ENCODE measurements at regions of chr16 and their contacts with region 1.

Region 1: GRCh38 chr16:85114909-85115567 is 2.8 kb upstream of the CIBAR2 start:
- DNase-seq: no peak
- H3K4me3 ChIP-seq: no peak overlapping the region
- H3K27me3 ChIP-seq: no peaks in the 10 kb centered on the region
- CTCF ChIP-seq: peak; percentile 99

Region 2: GRCh38 chr16:84995663-84996062 is 119.4 kb before region 1 on chr16:
- CTCF ChIA-PET with region 1: no interaction called
- POLR2A ChIA-PET with region 1: no interaction called
- DNase-seq: no peak
- H3K4me3 ChIP-seq: no peak overlapping the region
- H3K27me3 ChIP-seq: no peaks in the 10 kb centered on the region
- CTCF ChIP-seq: no peak

Region 3: GRCh38 chr16:85126705-85127419 is 11.8 kb after region 1 on chr16:
- CTCF ChIA-PET with region 1: interaction called, 36 read pairs
- POLR2A ChIA-PET with region 1: no interaction called
- DNase-seq: no peak
- H3K4me3 ChIP-seq: no peak overlapping the region
- H3K27me3 ChIP-seq: no peaks in the 10 kb centered on the region
- CTCF ChIP-seq: peak; percentile 13; the same call in 1 of the 2 replicates

Region 4: GRCh38 chr16:85172455-85173145 is 57.6 kb after region 1 on chr16:
- CTCF ChIA-PET with region 1: interaction called, 15 read pairs
- POLR2A ChIA-PET with region 1: no interaction called
- DNase-seq: no peak
- H3K4me3 ChIP-seq: peak overlapping the region; percentile 48
- H3K27me3 ChIP-seq: no peaks in the 10 kb centered on the region
- CTCF ChIP-seq: peak; percentile 29

Region 5: DNA sequence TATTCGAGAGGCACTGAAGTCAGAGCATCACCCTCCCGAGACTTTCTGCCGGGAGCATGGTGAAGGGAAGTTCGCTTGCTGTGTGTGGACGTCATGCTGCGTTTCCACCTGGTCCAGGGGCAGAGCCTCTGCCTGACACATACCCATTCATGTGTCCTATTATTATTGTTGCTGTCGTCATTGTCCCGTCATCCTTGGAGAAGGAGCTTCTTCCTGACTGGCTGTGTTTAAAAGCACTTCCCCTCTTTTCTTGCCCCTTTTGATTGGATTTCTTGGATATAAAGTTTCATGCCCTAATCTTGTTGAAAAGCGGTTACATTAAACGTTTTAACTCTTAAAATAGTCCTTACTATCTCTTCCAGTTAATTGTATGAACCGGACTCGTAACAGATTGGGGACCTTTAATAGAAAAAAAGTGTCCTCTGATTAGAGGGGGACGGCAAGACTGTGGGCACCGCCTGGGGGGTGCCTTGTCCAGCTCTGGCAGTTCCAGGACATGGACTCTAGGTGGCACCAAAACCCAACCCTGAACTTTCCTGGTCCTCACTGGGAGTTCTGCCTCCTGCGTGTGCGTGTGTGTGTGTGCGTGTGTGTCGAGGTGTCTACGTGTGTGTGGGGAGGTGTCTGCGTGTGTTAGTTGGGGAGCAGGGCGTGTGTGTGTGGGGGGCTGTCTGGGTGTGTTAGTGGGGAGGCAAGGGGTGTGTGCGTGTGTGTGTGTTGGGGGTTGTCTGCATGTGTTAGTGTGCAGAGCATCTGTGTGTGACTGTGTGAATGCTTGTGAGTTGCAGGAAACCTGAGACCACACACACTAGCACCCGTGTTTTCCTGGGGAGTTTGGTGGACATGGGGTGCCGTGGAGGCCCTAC is 130.5 kb after region 1 on chr16:
- CTCF ChIA-PET with region 1: interaction called, 14 read pairs
- POLR2A ChIA-PET with region 1: no interaction called
- DNase-seq: no peak
- H3K4me3 ChIP-seq: no peak overlapping the region
- H3K27me3 ChIP-seq: no peaks in the 10 kb centered on the region
- CTCF ChIP-seq: peak; percentile 94

Region 6: GRCh38 chr16:85258629-85259028 is 143.6 kb after region 1 on chr16:
- CTCF ChIA-PET with region 1: interaction called, 21 read pairs
- POLR2A ChIA-PET with region 1: no interaction called
- DNase-seq: no peak
- H3K4me3 ChIP-seq: no peak overlapping the region
- H3K27me3 ChIP-seq: no peaks in the 10 kb centered on the region
- CTCF ChIP-seq: no peak

Region 7: DNA sequence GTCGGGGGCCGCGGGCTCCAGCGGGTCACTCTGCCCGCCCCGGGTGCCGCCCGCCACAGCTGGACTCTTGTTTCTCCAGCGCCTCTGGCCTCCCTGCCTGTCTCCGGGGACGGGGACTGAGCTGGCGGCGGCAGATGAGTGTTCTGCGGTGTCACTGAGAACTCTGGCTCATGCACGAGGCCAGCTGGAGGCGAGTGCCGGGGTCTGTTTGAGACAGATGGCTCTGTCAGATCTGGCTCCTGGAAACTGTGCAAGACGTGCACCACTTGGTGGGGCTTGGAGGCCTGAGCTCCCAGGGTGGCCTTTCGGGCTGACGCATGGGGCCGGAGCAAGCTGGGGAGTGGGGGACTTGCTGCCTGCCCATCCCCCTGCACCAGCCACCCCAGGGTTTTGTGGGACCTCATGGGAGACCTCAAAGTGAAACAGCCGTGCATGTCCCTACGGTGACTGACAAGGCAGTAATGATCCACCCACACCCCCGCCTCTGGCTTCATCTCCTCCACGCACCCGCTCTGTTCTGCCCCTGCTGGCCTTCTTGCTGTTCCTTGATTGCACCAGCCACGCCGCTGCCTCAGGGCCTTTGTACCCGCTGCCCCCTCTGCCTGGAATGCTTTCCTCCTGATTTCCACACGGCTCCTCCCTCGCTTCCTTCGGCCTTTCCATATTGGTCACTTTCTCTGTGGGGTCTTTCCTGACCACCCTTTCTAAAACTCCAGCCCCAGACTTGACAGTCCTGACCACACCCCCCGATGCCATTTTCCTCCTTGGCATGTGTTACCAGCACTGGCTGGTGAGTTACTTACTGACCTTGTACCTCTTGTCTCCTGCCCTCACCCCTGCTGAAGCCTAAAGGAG is 172.2 kb after region 1 on chr16:
- CTCF ChIA-PET with region 1: interaction called, 11 read pairs
- POLR2A ChIA-PET with region 1: no interaction called
- DNase-seq: no peak
- H3K4me3 ChIP-seq: no peak overlapping the region
- H3K27me3 ChIP-seq: no peaks in the 10 kb centered on the region
- CTCF ChIP-seq: peak; percentile 37; the same call in 1 of the 2 replicates

Measured in BJ (cell line).